Naive thymus-derived CD4-positive, alpha-beta T cell (primary cell): ENCODE measurements at regions of chr21 and their contacts with region 1.

Region 1: DNA sequence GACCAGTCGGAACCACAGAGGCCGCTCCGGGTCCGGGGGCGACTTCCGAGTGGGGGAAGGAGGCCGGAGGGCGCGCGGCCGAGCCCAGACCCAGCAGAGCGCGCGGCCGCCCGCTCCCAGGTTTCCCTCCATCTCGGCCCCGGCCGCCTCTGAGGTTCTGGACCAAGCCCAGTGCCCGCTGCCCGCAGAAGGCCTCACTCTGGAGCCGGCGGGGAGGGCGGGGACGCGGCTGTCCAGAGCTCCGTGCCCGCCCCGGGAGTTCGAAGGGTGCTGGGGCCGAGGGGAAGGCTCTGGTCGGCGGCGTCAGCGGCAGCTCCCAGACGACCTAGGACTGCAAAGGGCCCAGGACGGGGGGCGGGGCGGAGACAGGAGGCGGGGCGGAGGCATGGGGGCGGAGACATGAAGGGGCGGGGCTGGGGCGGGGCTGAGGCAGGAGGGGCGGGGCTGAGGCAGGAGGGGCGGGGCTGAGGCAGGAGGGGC is 48.0 kb upstream of the SLC19A1 start:
- DNase-seq: peak in 3 of 9 donors; percentile 72 to 81 (median 78)
- ATAC-seq: peak; percentile 83
- H3K4me3 ChIP-seq: peak overlapping the region; percentile 42
- H3K4me3 Mint-ChIP-seq: peak overlapping the region in 8 of 10 donors; percentile 21 to 69 (median 48)
- H3K27ac ChIP-seq: peak overlapping the region; percentile 65
- H3K27ac Mint-ChIP-seq: peak overlapping the region in 1 of 9 donors; percentile 16
- H3K4me1 ChIP-seq: peaks cover 21 to 22% of the 10 kb centered on the region in 2 donors
- H3K4me1 Mint-ChIP-seq: peaks cover 0 to 22% (median 7%) of the 10 kb centered on the region in 7 donors
- H3K27me3 ChIP-seq: no peaks in the 10 kb centered on the region
- H3K27me3 Mint-ChIP-seq: peaks cover 0 to 17% (median 11%) of the 10 kb centered on the region in 5 donors

Region 2: GRCh38 chr21:45287438-45288391 is 302.6 kb before region 1 on chr21 and contains the start of gene POFUT2:
- CTCF ChIA-PET with region 1: no interaction called
- POLR2A ChIA-PET with region 1: no interaction called
- intact Hi-C with region 1: loop called (anchors 2 to 5 kb)
- DNase-seq: peak; percentile 95 to 100 (median 98)
- ATAC-seq: peak; percentile 91
- H3K4me3 ChIP-seq: peak within 1 kb of the TSS; percentile 68
- H3K4me3 Mint-ChIP-seq: peak within 1 kb of the TSS; percentile 68 to 88 (median 87)
- H3K27ac ChIP-seq: peak within 1 kb of the TSS; percentile 97
- H3K27ac Mint-ChIP-seq: peak within 1 kb of the TSS; percentile 72 to 93 (median 87)
- H3K4me1 ChIP-seq: peaks cover 7 to 16% of the 10 kb centered on the region in 2 donors
- H3K4me1 Mint-ChIP-seq: peaks cover 11 to 46% (median 30%) of the 10 kb centered on the region in 7 donors
- H3K27me3 ChIP-seq: no peaks in the 10 kb centered on the region
- H3K27me3 Mint-ChIP-seq: peaks cover 0 to 10% (median 0%) of the 10 kb centered on the region in 5 donors
- total RNA-seq, gene POFUT2: 20.1 to 53.3 (median 47.8) TPM

Region 3: DNA sequence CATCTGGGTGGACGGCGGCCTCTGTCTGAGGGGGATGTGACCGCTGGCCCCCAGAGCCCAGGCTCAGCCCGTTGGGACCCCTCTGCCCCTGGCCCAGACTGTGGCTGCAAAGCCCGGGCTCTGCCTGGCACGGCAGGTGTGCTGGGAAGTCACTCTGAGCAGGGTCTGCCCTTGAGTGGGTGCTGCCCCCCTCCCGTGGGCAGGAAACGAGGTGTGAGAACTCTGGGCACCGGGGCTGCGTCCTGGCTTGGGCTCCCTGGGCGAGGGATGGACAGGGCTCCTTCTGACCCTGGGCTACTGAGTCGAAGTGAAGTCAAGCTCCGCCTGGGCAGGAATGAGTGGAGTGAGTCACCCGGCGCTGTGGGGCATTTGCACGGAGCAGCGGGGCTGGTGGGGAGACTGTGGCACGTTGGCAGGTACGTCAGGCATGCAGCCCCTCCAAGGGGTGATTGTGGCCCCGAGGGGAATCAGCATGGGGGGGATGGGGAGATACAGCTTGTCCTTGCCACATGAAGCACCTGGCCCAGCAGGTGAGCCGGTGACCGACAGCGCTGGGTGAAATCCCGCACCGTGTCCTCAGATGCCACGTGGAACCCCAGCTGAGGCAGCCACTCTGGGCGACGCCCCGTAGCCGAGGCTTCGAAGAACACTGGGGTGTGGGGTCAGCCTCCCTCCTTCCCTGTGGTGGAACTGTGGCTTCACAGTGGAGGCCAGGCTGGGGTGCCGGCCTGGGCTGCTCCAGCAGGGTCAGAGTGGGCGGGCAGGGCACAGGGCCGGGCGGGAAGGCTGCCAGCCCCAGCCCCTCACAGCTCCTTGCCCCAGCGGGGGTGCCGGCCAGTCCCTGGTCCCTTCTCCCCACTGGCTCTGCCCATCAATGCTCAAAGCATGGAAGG is 123.0 kb before region 1 on chr21:
- CTCF ChIA-PET with region 1: no interaction called
- POLR2A ChIA-PET with region 1: no interaction called
- intact Hi-C with region 1: no loop called
- DNase-seq: no peak
- ATAC-seq: no peak
- H3K4me3 ChIP-seq: no peak overlapping the region
- H3K4me3 Mint-ChIP-seq: no peak overlapping the region
- H3K27ac ChIP-seq: no peak overlapping the region
- H3K27ac Mint-ChIP-seq: no peak overlapping the region
- H3K4me1 ChIP-seq: peaks cover 0 to 14% of the 10 kb centered on the region in 2 donors
- H3K4me1 Mint-ChIP-seq: peaks cover 0 to 19% (median 18%) of the 10 kb centered on the region in 7 donors
- H3K27me3 ChIP-seq: no peaks in the 10 kb centered on the region
- H3K27me3 Mint-ChIP-seq: peaks cover 0 to 16% (median 6%) of the 10 kb centered on the region in 5 donors

Region 4: DNA sequence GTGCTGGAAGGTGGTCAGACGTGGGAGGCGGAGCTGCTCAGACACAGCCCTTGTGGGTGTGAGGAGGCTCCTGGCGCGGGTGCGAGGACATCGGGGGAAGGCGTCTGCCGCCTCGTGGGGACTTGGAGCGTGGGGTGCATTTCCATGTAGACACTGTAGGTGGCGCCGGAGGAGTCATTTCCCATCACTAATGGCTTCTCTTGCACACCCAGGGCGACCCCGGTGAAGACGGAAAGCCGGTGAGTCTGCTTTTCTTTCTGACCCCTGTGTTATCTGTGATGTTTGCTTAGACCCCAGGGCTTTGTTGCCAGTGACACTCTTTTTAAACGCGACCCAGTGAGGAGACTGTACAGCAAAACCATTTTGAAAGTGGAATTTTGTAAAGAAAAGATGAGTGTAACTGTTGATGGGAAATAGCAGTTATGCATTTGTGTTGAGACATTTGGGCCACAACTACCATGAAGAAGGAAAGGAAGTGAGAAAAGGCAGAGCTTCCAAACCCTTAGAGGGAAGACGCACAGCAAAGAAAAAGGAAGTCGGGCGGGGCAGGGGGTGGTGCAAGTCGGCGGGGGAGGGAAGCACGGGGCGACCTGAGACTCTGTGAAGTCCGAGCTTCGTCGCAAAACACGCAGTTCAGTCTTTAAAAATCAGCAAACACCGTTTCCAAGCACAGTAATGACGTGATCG is 112.0 kb before region 1 on chr21:
- CTCF ChIA-PET with region 1: no interaction called
- POLR2A ChIA-PET with region 1: interaction called, 3 read pairs
- intact Hi-C with region 1: loop called in 1 of 2 experiments (anchors 1 kb)
- DNase-seq: peak; percentile 66 to 88 (median 84)
- ATAC-seq: peak; percentile 88
- H3K4me3 ChIP-seq: peak overlapping the region; percentile 78
- H3K4me3 Mint-ChIP-seq: peak overlapping the region; percentile 78 to 91 (median 84)
- H3K27ac ChIP-seq: peak overlapping the region; percentile 93
- H3K27ac Mint-ChIP-seq: peak overlapping the region; percentile 93 to 100 (median 99)
- H3K4me1 ChIP-seq: peaks cover 14 to 53% of the 10 kb centered on the region in 2 donors
- H3K4me1 Mint-ChIP-seq: peaks cover 27 to 65% (median 43%) of the 10 kb centered on the region in 7 donors
- H3K27me3 ChIP-seq: no peaks in the 10 kb centered on the region
- H3K27me3 Mint-ChIP-seq: no peaks in the 10 kb centered on the region

Region 5: DNA sequence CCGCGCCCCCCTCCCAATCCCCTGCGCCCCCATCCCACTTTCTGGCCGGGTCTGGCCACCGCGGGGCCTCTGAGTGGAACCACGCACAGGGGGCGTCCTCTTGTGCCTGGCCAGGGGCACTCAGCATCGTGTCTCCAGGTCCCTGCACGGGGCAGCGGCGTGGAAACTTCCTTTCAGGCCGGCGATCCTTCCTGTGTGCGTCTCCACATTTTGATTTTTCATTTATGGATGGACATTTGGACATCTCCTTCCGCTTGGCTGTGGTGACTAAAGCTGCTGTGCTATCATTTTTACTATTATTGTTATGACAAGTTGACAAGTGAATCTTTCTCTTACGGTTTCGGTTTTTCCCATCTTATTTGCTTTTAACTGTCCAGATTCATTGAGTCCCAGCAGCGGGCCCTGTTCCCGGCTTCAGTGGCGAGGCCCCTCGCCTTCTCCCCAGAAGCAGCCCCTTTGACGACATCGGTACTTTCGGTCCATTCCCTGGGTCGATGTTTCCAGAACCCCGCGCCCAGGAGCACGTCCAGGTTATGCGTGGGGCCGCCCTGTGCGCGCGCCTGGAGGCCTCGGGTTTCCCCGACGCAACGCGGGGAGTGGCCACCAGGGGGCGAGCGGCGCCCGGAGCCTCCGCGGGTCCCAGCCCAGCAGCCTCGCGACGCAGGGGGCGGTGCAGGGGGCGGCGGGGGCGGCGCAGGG is 35.7 kb before region 1 on chr21:
- CTCF ChIA-PET with region 1: no interaction called
- POLR2A ChIA-PET with region 1: no interaction called
- intact Hi-C with region 1: loop called in 1 of 2 experiments (anchors 1 kb)
- DNase-seq: peak; percentile 74 to 99 (median 91)
- ATAC-seq: peak; percentile 93
- H3K4me3 ChIP-seq: peak overlapping the region; percentile 89
- H3K4me3 Mint-ChIP-seq: peak overlapping the region; percentile 92 to 99 (median 96)
- H3K27ac ChIP-seq: peak overlapping the region; percentile 67
- H3K27ac Mint-ChIP-seq: peak overlapping the region; percentile 87 to 99 (median 96)
- H3K4me1 ChIP-seq: peaks cover 24 to 26% of the 10 kb centered on the region in 2 donors
- H3K4me1 Mint-ChIP-seq: peaks cover 22 to 39% (median 28%) of the 10 kb centered on the region in 7 donors
- H3K27me3 ChIP-seq: no peaks in the 10 kb centered on the region
- H3K27me3 Mint-ChIP-seq: no peaks in the 10 kb centered on the region

Region 6: GRCh38 chr21:45615145-45615711 is 24.9 kb after region 1 on chr21:
- CTCF ChIA-PET with region 1: no interaction called
- POLR2A ChIA-PET with region 1: interaction called, 4 read pairs
- intact Hi-C with region 1: loop called (anchors 1 kb)
- DNase-seq: peak; percentile 73 to 95 (median 93)
- ATAC-seq: peak; percentile 94
- H3K4me3 ChIP-seq: peak overlapping the region; percentile 45
- H3K4me3 Mint-ChIP-seq: peak overlapping the region; percentile 79 to 95 (median 87)
- H3K27ac ChIP-seq: peak overlapping the region; percentile 95
- H3K27ac Mint-ChIP-seq: peak overlapping the region; percentile 73 to 100 (median 98)
- H3K4me1 ChIP-seq: peaks cover 16 to 41% of the 10 kb centered on the region in 2 donors
- H3K4me1 Mint-ChIP-seq: peaks cover 17 to 58% (median 48%) of the 10 kb centered on the region in 7 donors
- H3K27me3 ChIP-seq: no peaks in the 10 kb centered on the region
- H3K27me3 Mint-ChIP-seq: peaks cover 0 to 34% (median 0%) of the 10 kb centered on the region in 5 donors

Region 7: GRCh38 chr21:45768751-45769070 is 178.4 kb after region 1 on chr21:
- CTCF ChIA-PET with region 1: interaction called, 3 read pairs
- POLR2A ChIA-PET with region 1: no interaction called
- intact Hi-C with region 1: loop called in 1 of 2 experiments (anchors 5 kb)
- DNase-seq: peak in 1 of 9 donors; percentile 45
- ATAC-seq: no peak
- H3K4me3 ChIP-seq: no peak overlapping the region
- H3K4me3 Mint-ChIP-seq: peak overlapping the region in 7 of 10 donors; percentile 43 to 76 (median 56)
- H3K27ac ChIP-seq: no peak overlapping the region
- H3K27ac Mint-ChIP-seq: peak overlapping the region; percentile 53 to 97 (median 94)
- H3K4me1 ChIP-seq: peaks cover 0 to 29% of the 10 kb centered on the region in 2 donors
- H3K4me1 Mint-ChIP-seq: peaks cover 15 to 51% (median 38%) of the 10 kb centered on the region in 7 donors
- H3K27me3 ChIP-seq: no peaks in the 10 kb centered on the region
- H3K27me3 Mint-ChIP-seq: no peaks in the 10 kb centered on the region

Region 8: DNA sequence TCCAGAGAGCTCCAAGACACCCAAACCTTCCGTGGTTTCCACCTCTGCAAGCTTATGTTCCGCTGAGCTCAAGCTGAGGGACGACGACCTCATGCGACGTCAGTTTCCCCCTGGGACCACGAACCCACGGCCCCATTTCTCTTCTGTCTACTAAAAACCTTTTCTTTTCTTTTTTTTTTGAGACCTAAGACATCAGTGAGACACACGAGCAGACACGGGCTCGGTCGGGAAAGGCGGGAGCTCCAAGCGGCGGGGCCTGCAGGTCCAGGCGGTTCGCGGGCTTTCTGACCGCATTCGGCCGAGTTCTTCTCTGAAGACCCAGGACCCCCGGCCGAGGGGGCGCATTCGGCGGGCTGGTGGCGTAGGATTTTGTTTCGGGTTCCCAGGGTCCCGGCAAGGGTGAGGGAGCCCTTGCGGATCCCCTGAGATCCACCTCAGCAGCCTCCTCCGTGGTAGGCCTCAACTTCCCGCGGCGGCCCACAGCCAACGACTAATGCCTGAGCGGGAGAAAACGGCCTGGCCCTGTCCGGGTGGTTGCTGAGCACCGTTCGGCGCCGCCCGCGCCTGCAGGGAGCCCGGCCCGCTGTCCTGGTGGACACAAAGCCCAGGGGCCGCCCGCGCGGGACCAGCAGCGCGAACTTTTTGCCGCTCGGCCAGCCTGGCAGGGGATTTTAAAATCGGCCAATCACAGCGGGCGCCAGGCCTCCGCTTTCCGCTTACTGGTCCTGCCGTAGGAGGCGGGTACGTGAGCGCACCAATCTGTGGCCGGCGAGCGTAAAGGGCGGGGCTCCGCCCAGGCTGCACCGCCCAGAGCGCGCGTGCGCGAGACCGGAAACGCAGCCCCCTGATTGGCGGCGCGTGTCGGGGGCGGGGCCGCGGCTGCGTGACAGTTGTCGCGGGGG is 733.2 kb after region 1 on chr21 and contains the start of gene C21orf58:
- CTCF ChIA-PET with region 1: no interaction called
- POLR2A ChIA-PET with region 1: no interaction called
- intact Hi-C with region 1: loop called in 1 of 2 experiments (anchors 5 kb)
- DNase-seq: peak; percentile 96 to 99 (median 98)
- ATAC-seq: peak; percentile 90
- H3K4me3 ChIP-seq: peak within 1 kb of the TSS; percentile 98
- H3K4me3 Mint-ChIP-seq: peak within 1 kb of the TSS; percentile 90 to 98 (median 96)
- H3K27ac ChIP-seq: peak within 1 kb of the TSS; percentile 97
- H3K27ac Mint-ChIP-seq: peak within 1 kb of the TSS; percentile 91 to 99 (median 97)
- H3K4me1 ChIP-seq: peaks cover 0 to 16% of the 10 kb centered on the region in 2 donors
- H3K4me1 Mint-ChIP-seq: peaks cover 14 to 44% (median 33%) of the 10 kb centered on the region in 7 donors
- H3K27me3 ChIP-seq: no peaks in the 10 kb centered on the region
- H3K27me3 Mint-ChIP-seq: no peaks in the 10 kb centered on the region
- total RNA-seq, gene C21orf58: 5.0 to 38.4 (median 9.0) TPM